ENCODE measurements at regions of chr12 and their contacts with region 1.

Region 1: GRCh38 chr12:55619354-55620138 is 17.1 kb upstream of the OR10P1 start:
- DNase-seq: no peak
- ATAC-seq: peak; percentile 91
- H3K4me3 ChIP-seq: no peak overlapping the region
- H3K27ac ChIP-seq: no peak overlapping the region
- H3K4me1 ChIP-seq: peaks cover 0 to 2% of the 10 kb centered on the region in 2 donors
- H3K27me3 ChIP-seq: no peaks in the 10 kb centered on the region

Region 2: DNA sequence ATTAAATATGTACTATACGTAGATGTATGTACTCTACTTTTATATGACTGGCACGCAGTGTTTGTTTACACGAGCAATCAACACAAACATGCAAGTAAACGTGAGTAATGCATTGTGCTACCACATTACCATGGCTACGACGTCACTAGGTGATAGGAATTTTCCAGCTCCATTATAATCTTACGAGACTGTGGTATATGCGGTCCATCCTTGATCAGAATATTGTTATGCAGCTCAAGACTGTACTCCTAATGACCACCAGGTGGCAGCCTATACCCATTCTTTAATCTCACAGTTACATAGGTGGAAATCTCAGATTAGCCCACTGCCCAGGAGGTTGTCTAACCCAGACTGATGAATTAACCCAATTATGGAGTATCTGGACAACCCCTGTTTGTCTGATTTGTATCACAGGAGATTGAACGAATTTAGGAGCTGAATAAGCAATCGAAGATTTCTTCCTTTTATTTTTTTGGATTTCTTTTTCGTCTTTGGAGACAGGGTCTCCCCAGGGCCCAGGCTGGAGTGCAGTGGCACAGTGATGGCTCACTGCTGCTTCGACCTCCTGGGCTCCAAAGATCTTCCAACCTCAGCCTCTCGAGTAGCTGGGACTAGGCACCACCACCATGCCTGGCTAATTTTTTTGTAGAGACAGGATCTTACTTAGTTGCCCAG is 626.2 kb before region 1 on chr12:
- intact Hi-C with region 1: loop called in 1 of 2 experiments (anchors 10 kb)
- DNase-seq: no peak
- ATAC-seq: peak; percentile 77
- H3K4me3 ChIP-seq: no peak overlapping the region
- H3K27ac ChIP-seq: no peak overlapping the region
- H3K4me1 ChIP-seq: no peaks in the 10 kb centered on the region
- H3K27me3 ChIP-seq: peaks cover 0 to 2% of the 10 kb centered on the region in 2 donors

Region 3: GRCh38 chr12:55188974-55189556 is 430.5 kb before region 1 on chr12:
- intact Hi-C with region 1: loop called (anchors 2 to 5 kb)
- DNase-seq: no peak
- ATAC-seq: no peak
- H3K4me3 ChIP-seq: no peak overlapping the region
- H3K27ac ChIP-seq: no peak overlapping the region
- H3K4me1 ChIP-seq: no peaks in the 10 kb centered on the region
- H3K27me3 ChIP-seq: no peaks in the 10 kb centered on the region

Region 4: DNA sequence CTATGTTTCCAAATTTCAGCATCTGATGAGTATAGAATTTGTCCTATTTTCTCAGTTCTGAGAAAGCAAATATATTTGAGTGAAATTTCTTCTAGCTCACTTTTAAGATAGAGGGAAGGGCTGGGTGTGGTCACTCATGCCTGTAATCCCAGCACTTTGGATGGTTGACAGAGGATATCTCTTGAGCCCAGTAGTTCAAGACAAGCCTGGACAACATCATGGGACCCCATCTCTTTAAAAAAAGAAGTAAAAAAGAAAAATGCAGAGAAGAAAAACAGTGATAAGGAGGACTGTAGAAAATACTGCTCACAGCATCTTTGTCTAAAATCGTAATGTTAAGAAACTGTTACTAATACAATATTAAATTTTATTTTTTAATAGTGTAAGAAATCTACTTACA is 147.3 kb before region 1 on chr12:
- intact Hi-C with region 1: no loop called
- DNase-seq: no peak
- ATAC-seq: no peak
- H3K4me3 ChIP-seq: no peak overlapping the region
- H3K27ac ChIP-seq: no peak overlapping the region
- H3K4me1 ChIP-seq: no peaks in the 10 kb centered on the region
- H3K27me3 ChIP-seq: no peaks in the 10 kb centered on the region

Region 5: GRCh38 chr12:55659486-55660385 is 40.2 kb after region 1 on chr12:
- intact Hi-C with region 1: no loop called
- DNase-seq: no peak
- ATAC-seq: no peak
- H3K4me3 ChIP-seq: no peak overlapping the region
- H3K27ac ChIP-seq: no peak overlapping the region
- H3K4me1 ChIP-seq: no peaks in the 10 kb centered on the region
- H3K27me3 ChIP-seq: no peaks in the 10 kb centered on the region

Region 6: DNA sequence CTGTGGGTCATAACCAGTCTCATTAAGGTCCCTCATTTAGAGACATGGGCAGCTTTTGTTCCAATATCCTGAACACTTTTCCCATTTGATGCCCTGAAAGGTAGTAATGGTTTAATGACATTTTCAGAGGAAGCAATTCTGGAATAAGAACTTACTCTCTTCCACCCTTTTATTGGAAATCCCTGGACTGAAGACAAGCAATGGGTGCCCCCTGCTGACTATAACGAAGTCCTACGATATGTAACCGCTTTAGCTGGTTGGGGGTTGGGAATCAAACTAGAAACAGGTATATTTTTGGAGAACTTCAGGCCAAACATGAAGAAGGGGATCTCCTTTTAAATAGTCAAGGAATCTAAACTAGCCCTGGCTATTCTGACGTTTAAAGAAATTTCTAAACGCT is 177.5 kb after region 1 on chr12:
- intact Hi-C with region 1: no loop called
- DNase-seq: no peak
- ATAC-seq: no peak
- H3K4me3 ChIP-seq: no peak overlapping the region
- H3K27ac ChIP-seq: no peak overlapping the region
- H3K4me1 ChIP-seq: no peaks in the 10 kb centered on the region
- H3K27me3 ChIP-seq: no peaks in the 10 kb centered on the region